ENCODE measurements at regions of chr12 and their contacts with region 1.

Region 1: DNA sequence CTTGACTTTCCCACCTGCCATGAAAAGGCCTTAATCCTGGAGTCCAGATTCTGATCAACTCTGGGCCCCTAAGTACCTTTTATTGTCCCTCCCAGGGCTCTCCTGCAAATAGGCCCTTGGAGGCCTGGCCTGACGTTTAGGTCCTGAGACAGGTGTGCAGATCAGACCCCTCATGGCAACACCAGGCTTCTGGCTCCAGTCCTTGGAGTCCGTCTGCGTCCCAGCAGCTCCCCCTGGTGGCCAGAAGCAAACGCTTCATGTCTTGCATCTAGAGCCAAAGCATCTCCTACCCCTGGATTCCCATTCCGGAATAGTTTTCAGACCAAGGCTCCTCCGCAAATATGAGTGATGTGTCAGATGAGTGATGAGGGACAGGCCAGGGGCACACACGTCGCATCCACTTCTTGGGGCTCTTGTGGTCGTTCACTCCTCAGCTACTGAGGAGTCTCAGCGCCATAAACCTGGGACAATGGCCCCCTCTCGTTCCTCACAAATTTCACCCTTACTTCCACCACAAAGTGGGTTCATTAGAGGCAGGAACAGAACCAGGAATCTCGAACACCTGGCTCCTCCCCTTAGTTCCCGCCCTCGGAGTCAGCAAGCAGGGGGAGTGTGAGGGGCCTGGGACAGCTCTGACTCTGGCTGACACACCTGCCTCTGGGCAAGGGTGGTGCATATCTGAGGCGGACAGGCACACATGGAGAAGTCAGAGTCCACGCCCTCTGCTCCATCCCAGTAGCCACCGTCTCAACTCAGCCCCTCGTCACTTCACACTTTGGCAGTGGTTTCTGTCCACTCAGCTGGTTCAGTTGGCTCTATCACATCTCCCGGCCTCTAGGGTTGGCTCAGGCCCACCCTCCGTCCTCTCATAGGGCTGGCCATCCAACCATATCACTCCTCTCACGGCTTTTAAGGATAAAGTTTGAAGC is 77.9 kb upstream of the PWP1 start:
- DNase-seq: peak; percentile 5
- ATAC-seq: peak; percentile 97
- H3K4me3 ChIP-seq: no peak overlapping the region
- H3K27ac ChIP-seq: no peak overlapping the region
- H3K4me1 ChIP-seq: no peaks in the 10 kb centered on the region
- H3K27me3 ChIP-seq: no peaks in the 10 kb centered on the region
- CTCF ChIP-seq: peak; percentile 92 to 95 (median 93)
- EP300 ChIP-seq: no peak
- POLR2A ChIP-seq: no peak
- RAD21 ChIP-seq: peak; percentile 93

Region 2: DNA sequence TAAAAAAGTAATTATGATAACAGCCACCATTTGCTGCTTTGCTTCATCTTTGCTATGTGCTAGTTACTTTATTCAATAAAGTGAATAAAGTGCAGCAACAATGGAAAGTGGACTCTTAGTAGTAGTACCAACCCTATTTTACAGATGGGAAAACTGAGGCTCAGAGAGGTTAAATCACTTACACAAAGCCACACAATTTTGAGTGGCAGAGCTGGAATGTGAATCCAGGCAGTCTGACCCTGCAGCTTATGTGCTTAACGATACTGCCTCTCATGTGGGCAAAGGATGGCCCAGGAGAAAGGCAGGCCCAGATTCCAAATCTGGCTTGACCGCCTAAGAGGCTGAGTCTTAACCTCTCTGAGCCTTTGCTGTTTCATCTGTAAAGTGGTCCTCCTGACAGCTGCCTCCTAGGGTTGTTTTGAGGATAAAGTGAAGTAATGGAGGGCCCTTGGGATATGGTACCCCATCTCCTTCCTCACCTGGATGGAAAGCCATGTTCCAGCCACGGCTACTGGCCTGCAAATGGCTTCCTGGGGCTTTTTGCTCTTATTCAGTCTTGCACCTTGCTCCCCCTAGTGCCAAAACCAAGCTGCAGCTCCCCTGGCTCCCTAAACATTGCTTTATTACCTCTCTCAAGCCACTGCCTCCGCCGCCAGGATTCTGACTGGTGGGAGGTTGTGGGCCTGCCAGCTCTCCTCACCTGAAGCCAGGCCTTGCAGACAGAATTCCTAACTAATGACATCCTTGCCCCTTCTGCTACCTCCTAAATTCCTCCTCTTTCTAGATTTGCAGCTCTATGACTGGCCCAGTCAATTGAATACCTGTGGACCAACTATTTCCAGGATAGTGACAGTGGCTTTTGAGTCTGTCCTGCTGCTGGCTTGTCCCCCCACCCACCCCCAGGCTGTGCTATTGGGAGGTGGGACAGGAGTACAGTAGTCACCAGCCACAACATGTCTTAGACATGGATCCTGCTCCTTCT is 205.4 kb before region 1 on chr12:
- CTCF ChIA-PET with region 1: interaction called, 12 read pairs
- POLR2A ChIA-PET with region 1: no interaction called
- RAD21 ChIA-PET with region 1: interaction called, 3 read pairs
- SMC1A ChIA-PET with region 1: interaction called, 3 read pairs
- in situ Hi-C with region 1: no loop called
- intact Hi-C with region 1: no loop called
- DNase-seq: no peak
- ATAC-seq: peak; percentile 95
- H3K4me3 ChIP-seq: no peak overlapping the region
- H3K27ac ChIP-seq: no peak overlapping the region
- H3K4me1 ChIP-seq: no peaks in the 10 kb centered on the region
- H3K27me3 ChIP-seq: no peaks in the 10 kb centered on the region
- CTCF ChIP-seq: peak; percentile 61 to 72 (median 68)
- EP300 ChIP-seq: no peak
- POLR2A ChIP-seq: no peak
- RAD21 ChIP-seq: peak; percentile 49

Region 3: GRCh38 chr12:107448198-107448597 is 159.5 kb before region 1 on chr12:
- CTCF ChIA-PET with region 1: interaction called, 3 read pairs
- POLR2A ChIA-PET with region 1: no interaction called
- RAD21 ChIA-PET with region 1: interaction called, 3 read pairs
- SMC1A ChIA-PET with region 1: no interaction called
- in situ Hi-C with region 1: no loop called
- intact Hi-C with region 1: loop called (anchors 2 kb)
- DNase-seq: no peak
- ATAC-seq: no peak
- H3K4me3 ChIP-seq: no peak overlapping the region
- H3K27ac ChIP-seq: no peak overlapping the region
- H3K4me1 ChIP-seq: no peaks in the 10 kb centered on the region
- H3K27me3 ChIP-seq: peaks cover 0 to 2% of the 10 kb centered on the region in 2 experiments; a peak in 3 of 4 replicates
- CTCF ChIP-seq: peak; percentile 10 to 36 (median 32); a peak in 3 of 6 replicates
- EP300 ChIP-seq: no peak
- POLR2A ChIP-seq: no peak
- RAD21 ChIP-seq: peak; percentile 20; the same call in 1 of the 2 replicates

Region 4: GRCh38 chr12:107594995-107595394 is 12.7 kb before region 1 on chr12:
- CTCF ChIA-PET with region 1: interaction called, 47 read pairs
- POLR2A ChIA-PET with region 1: no interaction called
- RAD21 ChIA-PET with region 1: no interaction called
- SMC1A ChIA-PET with region 1: interaction called, 4 read pairs
- in situ Hi-C with region 1: no loop called
- intact Hi-C with region 1: no loop called
- DNase-seq: no peak
- ATAC-seq: no peak
- H3K4me3 ChIP-seq: no peak overlapping the region
- H3K27ac ChIP-seq: no peak overlapping the region
- H3K4me1 ChIP-seq: no peaks in the 10 kb centered on the region
- H3K27me3 ChIP-seq: no peaks in the 10 kb centered on the region
- CTCF ChIP-seq: no peak
- EP300 ChIP-seq: no peak
- POLR2A ChIP-seq: no peak
- RAD21 ChIP-seq: no peak

Region 5: GRCh38 chr12:107622005-107622404 is 14.3 kb after region 1 on chr12:
- CTCF ChIA-PET with region 1: interaction called, 10 read pairs
- POLR2A ChIA-PET with region 1: no interaction called
- RAD21 ChIA-PET with region 1: no interaction called
- SMC1A ChIA-PET with region 1: no interaction called
- in situ Hi-C with region 1: no loop called
- intact Hi-C with region 1: no loop called
- DNase-seq: no peak
- ATAC-seq: peak; percentile 43; the same call in 2 of the 3 replicates
- H3K4me3 ChIP-seq: no peak overlapping the region
- H3K27ac ChIP-seq: no peak overlapping the region
- H3K4me1 ChIP-seq: no peaks in the 10 kb centered on the region
- H3K27me3 ChIP-seq: peaks cover 0 to 2% of the 10 kb centered on the region in 2 experiments; a peak in 1 of 4 replicates
- CTCF ChIP-seq: peak; percentile 42 to 67 (median 62); a peak in 5 of 6 replicates
- EP300 ChIP-seq: no peak
- POLR2A ChIP-seq: no peak
- RAD21 ChIP-seq: peak; percentile 33; the same call in 1 of the 2 replicates

Measured in GM12878 (cell line).